OCI-LY7 (cell line): ENCODE measurements at regions of chr9 and their contacts with region 1.

Region 1: GRCh38 chr9:120755827-120756434 is 37.3 kb downstream of the FBXW2 start:
- DNase-seq: peak; percentile 79
- H3K4me3 ChIP-seq: no peak overlapping the region
- H3K27ac ChIP-seq: peak overlapping the region; percentile 34
- H3K4me1 ChIP-seq: peaks cover 32% of the 10 kb centered on the region
- CTCF ChIP-seq: peak; percentile 95

Region 2: GRCh38 chr9:120740135-120740534 is 15.8 kb before region 1 on chr9:
- CTCF ChIA-PET with region 1: no interaction called
- POLR2A ChIA-PET with region 1: no interaction called
- intact Hi-C with region 1: no loop called
- DNase-seq: no peak
- H3K4me3 ChIP-seq: no peak overlapping the region
- H3K27ac ChIP-seq: no peak overlapping the region
- H3K4me1 ChIP-seq: peaks cover 7% of the 10 kb centered on the region
- CTCF ChIP-seq: no peak

Region 3: GRCh38 chr9:120936011-120936763 is 180.3 kb after region 1 on chr9:
- CTCF ChIA-PET with region 1: no interaction called
- POLR2A ChIA-PET with region 1: no interaction called
- intact Hi-C with region 1: loop called (anchors 2 kb)
- DNase-seq: peak; percentile 92
- H3K4me3 ChIP-seq: peak overlapping the region; percentile 49
- H3K27ac ChIP-seq: peak overlapping the region; percentile 96
- H3K4me1 ChIP-seq: peaks cover 81% of the 10 kb centered on the region
- CTCF ChIP-seq: peak; percentile 100

Region 4: GRCh38 chr9:121059998-121060636 is 304.2 kb after region 1 on chr9:
- CTCF ChIA-PET with region 1: interaction called, 4 read pairs
- POLR2A ChIA-PET with region 1: interaction called, 3 read pairs
- intact Hi-C with region 1: loop called (anchors 1 kb)
- DNase-seq: peak; percentile 82
- H3K4me3 ChIP-seq: peak overlapping the region; percentile 11
- H3K27ac ChIP-seq: no peak overlapping the region
- H3K4me1 ChIP-seq: peaks cover 38% of the 10 kb centered on the region
- CTCF ChIP-seq: peak; percentile 95

Region 5: GRCh38 chr9:121322037-121322775 is 566.3 kb after region 1 on chr9:
- CTCF ChIA-PET with region 1: no interaction called
- POLR2A ChIA-PET with region 1: no interaction called
- intact Hi-C with region 1: loop called (anchors 5 kb)
- DNase-seq: no peak
- H3K4me3 ChIP-seq: no peak overlapping the region
- H3K27ac ChIP-seq: no peak overlapping the region
- H3K4me1 ChIP-seq: no peaks in the 10 kb centered on the region
- CTCF ChIP-seq: no peak